ENCODE measurements at regions of chr17 and their contacts with region 1.

Region 1: GRCh38 chr17:35930211-35931065 is at the start of gene RDM1:
- DNase-seq: peak; percentile 86

Region 2: GRCh38 chr17:35915153-35915969 is 15.1 kb before region 1 on chr17:
- CTCF ChIA-PET with region 1: interaction called, 4 read pairs
- POLR2A ChIA-PET with region 1: interaction called, 18 read pairs
- DNase-seq: no peak

Region 3: DNA sequence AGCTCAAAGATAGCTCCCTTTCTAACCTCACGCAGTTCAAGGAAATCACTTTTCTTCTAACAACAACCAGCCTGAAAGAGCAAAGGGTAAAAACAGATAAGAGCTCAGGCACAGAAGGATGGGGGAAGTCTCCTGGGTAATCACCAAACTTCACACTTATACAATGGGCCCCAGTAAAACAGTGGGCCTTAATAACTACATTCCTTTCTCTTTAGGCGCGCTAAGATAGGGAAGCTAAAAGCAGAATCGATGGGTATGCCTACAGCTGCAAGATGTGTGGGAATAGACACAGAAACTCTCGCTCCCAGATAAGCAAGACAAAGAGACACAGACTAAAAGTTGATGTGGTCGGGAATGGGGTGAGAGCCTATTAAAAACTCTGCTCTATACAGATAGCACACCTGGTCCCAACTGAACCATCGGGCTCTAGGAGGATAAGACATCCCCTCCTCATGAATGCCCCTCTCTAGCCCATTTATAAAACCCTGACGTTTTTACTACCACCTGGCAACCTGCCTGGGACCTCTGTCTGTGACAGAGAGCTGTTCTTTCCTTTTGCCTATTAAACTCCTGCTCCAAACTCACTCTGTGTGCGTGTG is 12.2 kb after region 1 on chr17:
- CTCF ChIA-PET with region 1: interaction called, 3 read pairs
- POLR2A ChIA-PET with region 1: interaction called, 22 read pairs
- DNase-seq: no peak

Measured in HEK293T (cell line).